Common myeloid progenitor, CD34-positive (primary cell): ENCODE measurements at regions of chr4 and their contacts with region 1.

Region 1: GRCh38 chr4:69881173-69881773 is 21.3 kb upstream of the SULT1E1 start:
- DNase-seq: peak; percentile 42 to 72 (median 70)
- H3K4me3 ChIP-seq: no peak overlapping the region
- H3K27ac ChIP-seq: no peak overlapping the region
- H3K4me1 ChIP-seq: no peaks in the 10 kb centered on the region
- H3K27me3 ChIP-seq: no peaks in the 10 kb centered on the region

Region 2: DNA sequence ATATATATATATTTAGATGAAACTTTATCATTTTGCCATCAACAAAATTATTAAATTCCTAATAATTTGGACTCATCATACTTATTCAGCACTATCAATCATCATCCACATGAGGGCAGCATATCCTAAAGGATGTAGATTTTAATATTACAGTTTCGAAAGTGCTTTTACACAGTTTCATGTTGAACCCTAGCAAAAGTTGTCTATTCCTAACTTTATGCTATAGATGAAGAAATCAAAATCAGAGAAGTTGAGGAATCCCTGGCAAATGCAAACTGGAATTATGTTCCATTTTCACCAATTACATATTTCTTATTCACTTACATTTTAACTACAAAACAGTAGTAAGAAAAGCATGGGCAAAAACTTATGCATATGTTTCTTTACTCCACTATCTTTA is 191.7 kb before region 1 on chr4:
- CTCF ChIA-PET with region 1: interaction called, 17 read pairs
- POLR2A ChIA-PET with region 1: no interaction called
- DNase-seq: peak; percentile 44 to 70 (median 61)
- H3K4me3 ChIP-seq: peak overlapping the region in 1 of 7 experiments; percentile 45
- H3K27ac ChIP-seq: no peak overlapping the region
- H3K4me1 ChIP-seq: peaks cover 0 to 2% (median 0%) of the 10 kb centered on the region in 4 experiments
- H3K27me3 ChIP-seq: no peaks in the 10 kb centered on the region

Region 3: DNA sequence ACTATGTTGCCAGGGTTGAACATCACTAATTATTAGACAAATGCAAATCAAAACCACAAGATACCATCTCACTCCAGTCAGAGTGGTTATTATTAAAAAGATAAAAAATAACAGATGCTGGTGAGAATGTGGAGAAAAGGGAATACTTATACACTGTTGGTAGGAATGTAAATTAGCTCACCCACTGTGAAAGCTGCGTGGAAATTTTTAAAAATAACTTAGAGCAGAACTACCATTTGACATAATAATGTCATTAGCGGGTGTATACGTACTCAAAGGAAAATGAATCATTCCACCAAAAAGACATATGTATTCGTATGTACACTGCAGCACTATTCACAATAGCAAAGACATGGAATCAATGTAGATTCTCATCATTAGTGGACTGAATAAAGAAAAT is 179.6 kb before region 1 on chr4:
- CTCF ChIA-PET with region 1: interaction called, 10 read pairs
- POLR2A ChIA-PET with region 1: no interaction called
- DNase-seq: no peak
- H3K4me3 ChIP-seq: no peak overlapping the region
- H3K27ac ChIP-seq: no peak overlapping the region
- H3K4me1 ChIP-seq: no peaks in the 10 kb centered on the region
- H3K27me3 ChIP-seq: no peaks in the 10 kb centered on the region

Region 4: GRCh38 chr4:69713593-69713992 is 167.7 kb before region 1 on chr4:
- CTCF ChIA-PET with region 1: interaction called, 10 read pairs
- POLR2A ChIA-PET with region 1: no interaction called
- DNase-seq: peak in 2 of 3 donors; percentile 13 to 21
- H3K4me3 ChIP-seq: no peak overlapping the region
- H3K27ac ChIP-seq: no peak overlapping the region
- H3K4me1 ChIP-seq: peaks cover 0 to 6% (median 6%) of the 10 kb centered on the region in 4 experiments
- H3K27me3 ChIP-seq: no peaks in the 10 kb centered on the region

Region 5: GRCh38 chr4:69823481-69824186 is 57.6 kb before region 1 on chr4:
- CTCF ChIA-PET with region 1: interaction called, 17 read pairs
- POLR2A ChIA-PET with region 1: no interaction called
- DNase-seq: peak in 2 of 3 donors; percentile 62
- H3K4me3 ChIP-seq: no peak overlapping the region
- H3K27ac ChIP-seq: no peak overlapping the region
- H3K4me1 ChIP-seq: peaks cover 0 to 7% (median 2%) of the 10 kb centered on the region in 4 experiments
- H3K27me3 ChIP-seq: no peaks in the 10 kb centered on the region